HEK293T (cell line): ENCODE measurements at regions of chr17 and their contacts with region 1.

Region 1: DNA sequence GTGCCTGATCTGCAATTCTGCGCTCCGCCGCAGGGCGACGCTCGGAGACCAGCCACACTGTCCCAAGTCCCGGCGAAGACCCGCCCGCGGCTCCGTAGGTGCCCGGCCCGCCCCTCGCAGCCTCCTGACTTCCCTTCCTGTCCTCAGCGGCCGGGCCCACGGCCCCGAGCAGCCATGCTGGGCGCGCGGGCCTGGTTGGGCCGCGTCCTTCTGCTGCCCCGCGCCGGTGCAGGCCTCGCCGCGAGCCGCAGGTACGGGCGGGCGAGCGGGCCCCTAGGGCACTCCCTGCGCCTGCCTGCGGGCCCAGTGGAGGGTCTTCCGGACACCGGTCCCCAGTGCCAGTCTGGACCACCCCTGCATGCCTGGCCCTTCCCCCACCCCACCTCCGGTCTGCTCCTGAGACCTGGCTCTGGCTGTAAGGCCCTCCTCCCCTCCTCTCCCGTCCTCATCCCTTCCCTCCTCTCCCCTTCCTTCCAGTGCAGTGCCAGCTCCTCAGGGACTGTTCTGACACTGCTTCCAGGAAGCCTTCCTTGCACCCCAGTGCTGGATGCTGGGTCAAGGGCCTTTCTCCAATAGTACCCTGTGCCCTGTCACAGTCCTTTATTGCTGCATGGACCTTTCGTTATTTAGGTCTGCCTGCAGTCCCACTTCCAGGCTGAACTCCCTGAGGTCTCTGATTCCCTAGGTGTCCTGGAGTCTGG is at the start of gene SPATA20:
- DNase-seq: peak; percentile 90

Region 2: DNA sequence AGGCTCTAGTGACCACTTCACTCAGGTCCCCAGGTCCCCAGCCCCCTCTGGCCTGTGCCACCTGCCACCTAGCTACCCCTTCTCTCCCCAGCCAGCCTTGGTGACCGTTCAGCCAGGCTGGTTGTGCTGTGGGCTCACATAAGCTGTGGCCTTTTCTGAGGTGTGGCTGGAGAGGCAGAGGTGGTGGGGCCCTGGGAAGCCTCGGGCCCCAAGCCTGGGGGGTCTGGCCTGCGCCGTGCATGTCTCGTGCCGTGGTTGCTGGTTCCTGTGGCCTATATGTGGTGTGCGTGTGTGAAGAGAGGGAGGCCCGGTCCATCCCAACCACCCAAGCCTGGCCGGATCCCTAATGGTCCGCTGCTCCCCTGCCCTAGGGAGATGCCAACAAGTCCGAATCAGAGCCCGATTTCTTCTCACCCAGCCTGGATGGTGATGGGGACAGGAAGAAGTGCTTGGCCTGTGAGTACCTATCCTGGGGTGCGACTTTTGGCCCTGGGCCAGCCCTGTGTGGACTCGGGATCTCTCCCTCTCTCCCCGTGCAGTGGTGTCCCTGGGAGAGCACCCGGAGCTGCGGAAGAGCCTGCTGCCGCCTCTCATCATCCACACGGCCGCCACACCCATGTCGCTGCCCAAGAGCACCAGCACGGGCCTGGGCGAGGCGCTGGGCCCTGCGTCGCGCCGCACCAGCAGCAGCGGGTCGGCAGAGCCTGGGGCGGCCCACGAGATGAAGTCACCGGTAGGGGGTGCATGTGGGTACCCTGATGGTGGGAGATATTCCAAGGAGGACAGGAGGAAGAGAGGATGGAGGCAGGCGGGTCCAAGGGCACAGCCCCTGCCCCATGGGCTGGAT is 49.2 kb after region 1 on chr17:
- CTCF ChIA-PET with region 1: no interaction called
- POLR2A ChIA-PET with region 1: no interaction called
- DNase-seq: no peak

Region 3: GRCh38 chr17:50696365-50696879 is 149.2 kb after region 1 on chr17:
- CTCF ChIA-PET with region 1: interaction called, 18 read pairs
- POLR2A ChIA-PET with region 1: interaction called, 3 read pairs
- DNase-seq: no peak